Right lobe of liver (tissue), 6 donors: ENCODE measurements at regions of chr14 and their contacts with region 1.

Region 1: GRCh38 chr14:51539571-51540037 is 112.1 kb upstream of the FRMD6 start:
- DNase-seq: no peak
- ATAC-seq: peak in 1 of 4 donors; percentile 36
- H3K4me3 ChIP-seq: no peak overlapping the region
- H3K27ac ChIP-seq: no peak overlapping the region
- H3K4me1 ChIP-seq: peaks cover 0 to 6% (median 0%) of the 10 kb centered on the region in 4 donors
- H3K27me3 ChIP-seq: no peaks in the 10 kb centered on the region
- CTCF ChIP-seq: no peak
- POLR2A ChIP-seq: no peak

Region 2: DNA sequence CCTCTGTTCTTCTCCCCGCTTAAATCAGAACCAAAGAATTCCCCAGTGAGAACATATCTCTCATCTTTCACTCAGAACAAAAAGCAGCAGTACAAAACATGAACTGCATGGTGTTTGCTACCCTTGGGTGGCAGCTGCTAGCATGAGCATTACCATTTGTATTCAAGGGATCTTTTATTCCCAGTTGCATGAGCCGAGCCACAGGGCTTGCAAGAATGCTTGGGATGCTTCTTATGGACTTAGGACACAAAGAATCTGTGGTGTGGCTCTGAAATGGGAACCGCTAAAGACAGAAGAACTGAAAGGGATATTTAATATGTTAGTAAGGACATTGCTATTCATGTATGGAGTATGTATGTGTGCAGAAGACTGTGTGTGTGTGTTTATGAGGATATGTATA is 109.0 kb before region 1 on chr14:
- intact Hi-C with region 1: loop called in 1 of 2 experiments (anchors 10 kb)
- DNase-seq: no peak
- ATAC-seq: peak; percentile 15 to 54 (median 39)
- H3K4me3 ChIP-seq: no peak overlapping the region
- H3K27ac ChIP-seq: peak overlapping the region in 1 of 3 donors; percentile 24
- H3K4me1 ChIP-seq: peaks cover 0 to 31% (median 12%) of the 10 kb centered on the region in 4 donors
- H3K27me3 ChIP-seq: no peaks in the 10 kb centered on the region
- CTCF ChIP-seq: no peak
- POLR2A ChIP-seq: no peak

Region 3: DNA sequence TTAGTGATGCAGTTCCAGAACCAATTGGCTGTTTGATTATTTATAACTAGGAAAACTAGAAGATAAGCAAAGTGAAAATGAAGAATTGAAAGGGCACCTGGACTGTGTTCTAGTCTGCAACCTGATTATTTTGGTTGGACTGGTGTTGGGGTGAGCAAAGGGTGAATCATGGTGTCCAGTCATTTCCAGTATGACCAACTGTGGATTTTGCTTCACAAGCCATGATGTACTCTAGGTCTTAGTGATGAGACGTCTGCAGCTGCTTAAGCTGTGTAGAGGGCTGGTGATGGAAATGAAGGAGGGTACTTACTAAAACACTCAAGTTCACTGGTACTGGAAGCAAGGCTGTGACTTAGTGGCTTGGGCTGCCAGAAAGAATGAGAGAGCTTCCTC is 81.0 kb before region 1 on chr14:
- intact Hi-C with region 1: loop called in 1 of 2 experiments (anchors 5 kb)
- DNase-seq: no peak
- ATAC-seq: peak in 1 of 4 donors; percentile 18
- H3K4me3 ChIP-seq: no peak overlapping the region
- H3K27ac ChIP-seq: no peak overlapping the region
- H3K4me1 ChIP-seq: no peaks in the 10 kb centered on the region
- H3K27me3 ChIP-seq: no peaks in the 10 kb centered on the region
- CTCF ChIP-seq: no peak
- POLR2A ChIP-seq: no peak

Region 4: GRCh38 chr14:51828017-51828797 is 288.6 kb after region 1 on chr14:
- intact Hi-C with region 1: no loop called
- DNase-seq: peak in 2 of 3 donors; percentile 33 to 59
- ATAC-seq: peak; percentile 45 to 50 (median 47)
- H3K4me3 ChIP-seq: no peak overlapping the region
- H3K27ac ChIP-seq: no peak overlapping the region
- H3K4me1 ChIP-seq: no peaks in the 10 kb centered on the region
- H3K27me3 ChIP-seq: no peaks in the 10 kb centered on the region
- CTCF ChIP-seq: no peak
- POLR2A ChIP-seq: no peak